Activated B cell treated with CpG ODN at 0.5 μM for 24 hours (primary cell): ENCODE measurements at regions of chrX and their contacts with region 1.

Region 1: DNA sequence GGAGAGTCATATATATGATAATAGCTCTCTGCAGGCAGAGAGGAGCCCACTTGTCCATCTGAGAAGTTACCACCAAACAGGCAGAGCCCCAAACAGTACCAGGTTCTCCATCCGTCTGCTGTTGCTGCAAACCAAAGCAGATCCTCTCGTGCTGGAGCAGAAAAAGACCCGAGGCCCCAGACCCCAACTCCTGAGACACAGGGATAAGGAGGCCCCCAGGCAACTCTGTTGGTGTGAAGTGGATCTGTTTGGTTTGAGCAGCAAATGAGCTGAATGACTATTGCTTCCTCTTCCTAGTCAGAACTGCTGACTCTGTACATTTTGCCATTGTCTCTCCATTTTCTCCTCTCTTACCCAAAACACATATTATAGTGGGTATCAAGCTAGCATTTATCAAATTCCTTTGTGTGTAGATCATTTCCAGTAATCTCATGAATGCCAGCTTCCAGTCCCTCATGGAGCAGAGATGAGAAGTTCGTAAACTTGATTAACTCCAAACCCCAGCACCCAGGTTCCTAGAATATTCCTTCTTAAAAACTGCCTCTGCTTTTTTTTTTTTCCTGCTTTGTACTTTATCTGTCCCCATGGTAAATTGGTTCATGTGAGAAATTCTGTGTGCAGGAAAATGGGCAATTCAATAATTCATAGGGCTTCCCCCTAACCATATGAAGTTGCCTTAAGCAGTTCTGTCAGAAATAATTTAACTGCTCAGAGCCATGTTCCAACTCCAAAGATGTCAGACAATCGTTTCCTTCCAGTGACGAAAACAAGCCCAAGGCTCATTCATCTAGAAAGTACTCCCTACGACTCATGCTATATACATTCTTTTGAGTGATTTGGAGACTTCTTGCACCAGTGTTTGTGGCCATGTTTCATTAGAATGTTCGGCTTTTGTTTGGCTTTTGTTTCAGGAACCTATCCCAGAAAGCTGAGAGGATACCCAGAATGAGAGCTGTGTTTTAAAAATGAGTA is 98.6 kb upstream of the ATXN3L start:
- DNase-seq: no peak
- ATAC-seq: no peak
- H3K4me3 Mint-ChIP-seq: peak overlapping the region; percentile 35
- H3K27ac Mint-ChIP-seq: peak overlapping the region; percentile 92
- H3K4me1 Mint-ChIP-seq: peaks cover 70% of the 10 kb centered on the region
- H3K27me3 Mint-ChIP-seq: no peaks in the 10 kb centered on the region
- CTCF ChIP-seq: no peak

Region 2: GRCh38 chrX:13051529-13052172 is 366.8 kb before region 1 on chrX:
- CTCF ChIA-PET with region 1: no interaction called
- POLR2A ChIA-PET with region 1: interaction called, 11 read pairs
- intact Hi-C with region 1: no loop called
- DNase-seq: no peak
- ATAC-seq: peak; percentile 71
- H3K4me3 Mint-ChIP-seq: peak overlapping the region; percentile 19
- H3K27ac Mint-ChIP-seq: peak overlapping the region; percentile 82
- H3K4me1 Mint-ChIP-seq: peaks cover 57% of the 10 kb centered on the region
- H3K27me3 Mint-ChIP-seq: no peaks in the 10 kb centered on the region
- CTCF ChIP-seq: no peak

Region 3: GRCh38 chrX:13254076-13254785 is 164.2 kb before region 1 on chrX:
- CTCF ChIA-PET with region 1: no interaction called
- POLR2A ChIA-PET with region 1: no interaction called
- intact Hi-C with region 1: loop called (anchors 5 kb)
- DNase-seq: no peak
- ATAC-seq: no peak
- H3K4me3 Mint-ChIP-seq: peak overlapping the region; percentile 28
- H3K27ac Mint-ChIP-seq: peak overlapping the region; percentile 74
- H3K4me1 Mint-ChIP-seq: peaks cover 72% of the 10 kb centered on the region
- H3K27me3 Mint-ChIP-seq: no peaks in the 10 kb centered on the region
- CTCF ChIP-seq: no peak

Region 4: DNA sequence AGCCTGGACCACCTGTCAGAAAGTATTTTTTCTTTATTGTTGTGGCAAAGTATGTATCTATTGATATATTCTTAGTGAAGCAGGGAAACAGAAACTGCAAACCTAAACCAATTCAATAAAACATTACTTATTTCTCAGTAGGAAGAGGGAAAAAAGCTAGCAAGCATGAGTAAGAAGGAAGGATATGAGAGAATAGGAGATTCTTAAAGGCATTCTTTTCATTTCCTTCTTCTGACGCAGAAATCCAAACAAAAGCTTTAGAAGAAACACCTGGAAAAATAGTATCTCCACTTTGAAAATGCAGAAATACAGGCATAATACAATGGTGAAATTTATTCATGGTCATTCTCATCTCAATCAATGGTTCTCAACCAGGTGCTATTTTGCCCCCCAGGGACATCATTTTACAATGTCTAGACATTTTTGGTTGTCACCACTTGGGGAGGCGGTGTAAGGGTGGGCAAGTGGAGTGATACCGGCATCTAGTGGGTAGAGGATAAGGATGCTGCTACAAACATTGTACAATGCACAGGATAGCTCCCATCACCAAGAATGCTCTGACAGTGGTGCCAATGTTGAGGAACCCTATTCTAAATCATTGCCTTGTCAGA is 76.8 kb before region 1 on chrX:
- CTCF ChIA-PET with region 1: no interaction called
- POLR2A ChIA-PET with region 1: no interaction called
- intact Hi-C with region 1: loop called (anchors 5 kb)
- DNase-seq: no peak
- ATAC-seq: no peak
- H3K4me3 Mint-ChIP-seq: no peak overlapping the region
- H3K27ac Mint-ChIP-seq: no peak overlapping the region
- H3K4me1 Mint-ChIP-seq: peaks cover 20% of the 10 kb centered on the region
- H3K27me3 Mint-ChIP-seq: no peaks in the 10 kb centered on the region
- CTCF ChIP-seq: no peak

Region 5: GRCh38 chrX:13440176-13440575 is 21.8 kb after region 1 on chrX:
- CTCF ChIA-PET with region 1: no interaction called
- POLR2A ChIA-PET with region 1: no interaction called
- intact Hi-C with region 1: loop called (anchors 2 kb)
- DNase-seq: no peak
- ATAC-seq: no peak
- H3K4me3 Mint-ChIP-seq: no peak overlapping the region
- H3K27ac Mint-ChIP-seq: no peak overlapping the region
- H3K4me1 Mint-ChIP-seq: peaks cover 42% of the 10 kb centered on the region
- H3K27me3 Mint-ChIP-seq: no peaks in the 10 kb centered on the region
- CTCF ChIP-seq: no peak

Region 6: GRCh38 chrX:13565511-13565910 is 147.1 kb after region 1 on chrX:
- CTCF ChIA-PET with region 1: no interaction called
- POLR2A ChIA-PET with region 1: no interaction called
- intact Hi-C with region 1: no loop called
- DNase-seq: no peak
- ATAC-seq: no peak
- H3K4me3 Mint-ChIP-seq: no peak overlapping the region
- H3K27ac Mint-ChIP-seq: no peak overlapping the region
- H3K4me1 Mint-ChIP-seq: peaks cover 2% of the 10 kb centered on the region
- H3K27me3 Mint-ChIP-seq: peaks cover 19% of the 10 kb centered on the region
- CTCF ChIP-seq: no peak